Caco-2 (cell line): ENCODE measurements at regions of chr16 and their contacts with region 1.

Region 1: DNA sequence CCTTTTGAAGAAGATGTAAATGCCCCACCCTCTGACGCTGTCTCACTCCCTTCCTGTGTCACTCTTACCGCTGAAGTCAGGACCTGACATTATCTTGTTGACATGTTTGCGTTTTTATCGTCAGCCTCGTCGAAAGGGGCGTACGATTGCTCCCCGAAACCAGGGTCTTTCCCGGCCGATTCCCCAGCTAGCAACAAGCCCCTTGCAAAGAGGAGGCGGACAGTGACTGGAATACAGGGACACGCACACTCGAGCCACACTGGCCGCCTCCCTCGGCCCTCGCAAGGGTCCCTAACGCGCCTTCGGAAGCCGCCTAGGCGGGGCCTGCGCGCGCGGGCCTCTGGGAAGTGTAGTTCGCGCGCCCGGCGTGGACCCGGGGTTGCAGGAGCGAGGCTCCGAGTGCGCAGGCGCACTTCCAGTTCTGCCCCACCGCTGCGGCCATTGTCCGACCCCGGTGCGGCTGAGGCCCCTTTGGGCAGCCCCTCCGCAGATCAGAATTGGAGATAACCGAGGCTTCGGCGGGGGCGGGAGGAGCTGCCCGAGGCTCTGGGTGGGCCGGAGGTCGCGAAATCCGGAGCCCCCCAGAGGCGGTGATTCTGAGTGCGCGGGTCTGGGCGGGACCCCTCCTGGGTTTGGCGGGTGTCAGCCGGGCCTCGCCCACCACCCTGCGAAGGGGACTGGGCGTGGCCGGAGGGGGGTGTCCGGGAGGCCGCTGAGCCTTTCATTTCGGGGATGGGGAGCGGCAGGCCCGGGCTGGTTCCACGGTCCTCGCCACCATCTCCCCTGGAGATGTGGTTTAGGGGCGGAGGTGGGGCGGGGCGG is at the start of gene ZFP90:
- DNase-seq: peak; percentile 89 to 94
- H3K4me3 ChIP-seq: peak within 1 kb of the TSS; percentile 76
- H3K4me3 Mint-ChIP-seq: peak within 1 kb of the TSS; percentile 91
- H3K27ac Mint-ChIP-seq: peak within 1 kb of the TSS; percentile 79
- H3K4me1 ChIP-seq: 0 out of 2 replicates have a peak, but pooled peaks cover 3% of the 10 kb centered on the region
- H3K4me1 Mint-ChIP-seq: peaks cover 6% of the 10 kb centered on the region
- H3K27me3 ChIP-seq: no peaks in the 10 kb centered on the region
- H3K27me3 Mint-ChIP-seq: no peaks in the 10 kb centered on the region
- CTCF ChIP-seq: no peak
- total RNA-seq, gene ZFP90: 16.5 and 23.2 TPM in 2 replicates

Region 2: DNA sequence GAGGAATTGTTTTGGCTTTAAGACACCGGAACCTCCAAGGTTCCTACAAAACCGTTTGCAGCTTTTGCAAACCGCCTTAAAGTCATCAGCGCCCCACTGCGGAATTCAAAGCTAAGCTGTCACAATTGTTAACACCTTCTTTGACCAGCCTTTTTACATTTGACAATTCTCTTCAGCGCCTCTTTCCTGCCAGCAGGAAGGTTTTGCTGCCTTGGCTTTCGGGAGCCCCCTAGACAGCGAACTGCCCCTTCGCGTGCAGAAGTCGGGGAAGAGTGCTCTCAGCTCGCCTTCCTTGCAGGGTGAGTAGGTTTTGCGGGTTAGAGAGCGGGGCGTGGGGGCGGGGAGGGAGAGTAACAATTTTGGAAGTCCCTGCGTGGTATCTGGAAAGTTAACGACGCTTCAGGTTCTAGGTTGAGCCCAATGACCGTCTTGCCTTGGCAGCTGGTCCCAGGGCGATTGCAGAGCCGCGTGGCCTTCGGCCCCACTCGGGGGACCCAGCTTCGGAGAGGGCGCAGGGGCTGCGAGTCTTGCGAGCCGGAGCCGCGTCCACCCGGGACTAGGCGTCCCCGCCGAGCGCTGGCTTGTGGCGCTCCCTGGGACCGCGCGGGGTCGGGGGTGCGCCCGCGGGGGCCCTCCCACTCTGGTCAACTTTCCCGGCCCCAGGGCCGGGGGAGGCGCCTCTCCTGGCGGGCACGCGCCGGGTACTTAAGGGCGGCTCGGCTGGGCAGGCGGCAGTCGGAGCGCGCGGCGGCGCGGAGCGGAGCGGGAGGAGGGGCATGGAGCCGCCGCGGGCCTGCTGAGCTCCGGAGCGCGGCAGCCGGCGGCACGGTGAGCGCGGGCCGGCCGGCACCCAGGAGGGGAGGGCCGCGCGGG is 566.6 kb after region 1 on chr16 and contains the start of gene HAS3:
- CTCF ChIA-PET with region 1: no interaction called
- POLR2A ChIA-PET with region 1: no interaction called
- intact Hi-C with region 1: loop called (anchors 10 kb)
- DNase-seq: peak; percentile 73 to 89
- H3K4me3 ChIP-seq: peak within 1 kb of the TSS; percentile 50
- H3K4me3 Mint-ChIP-seq: peak within 1 kb of the TSS; percentile 92
- H3K27ac Mint-ChIP-seq: peak within 1 kb of the TSS; percentile 61
- H3K4me1 ChIP-seq: peaks cover 9% of the 10 kb centered on the region
- H3K4me1 Mint-ChIP-seq: peaks cover 20% of the 10 kb centered on the region
- H3K27me3 ChIP-seq: no peaks in the 10 kb centered on the region
- H3K27me3 Mint-ChIP-seq: no peaks in the 10 kb centered on the region
- CTCF ChIP-seq: peak; percentile 33 to 60
- total RNA-seq, gene HAS3: 8.3 TPM in 2 replicates